ENCODE measurements at regions of chr7 and their contacts with region 1.

Region 1: DNA sequence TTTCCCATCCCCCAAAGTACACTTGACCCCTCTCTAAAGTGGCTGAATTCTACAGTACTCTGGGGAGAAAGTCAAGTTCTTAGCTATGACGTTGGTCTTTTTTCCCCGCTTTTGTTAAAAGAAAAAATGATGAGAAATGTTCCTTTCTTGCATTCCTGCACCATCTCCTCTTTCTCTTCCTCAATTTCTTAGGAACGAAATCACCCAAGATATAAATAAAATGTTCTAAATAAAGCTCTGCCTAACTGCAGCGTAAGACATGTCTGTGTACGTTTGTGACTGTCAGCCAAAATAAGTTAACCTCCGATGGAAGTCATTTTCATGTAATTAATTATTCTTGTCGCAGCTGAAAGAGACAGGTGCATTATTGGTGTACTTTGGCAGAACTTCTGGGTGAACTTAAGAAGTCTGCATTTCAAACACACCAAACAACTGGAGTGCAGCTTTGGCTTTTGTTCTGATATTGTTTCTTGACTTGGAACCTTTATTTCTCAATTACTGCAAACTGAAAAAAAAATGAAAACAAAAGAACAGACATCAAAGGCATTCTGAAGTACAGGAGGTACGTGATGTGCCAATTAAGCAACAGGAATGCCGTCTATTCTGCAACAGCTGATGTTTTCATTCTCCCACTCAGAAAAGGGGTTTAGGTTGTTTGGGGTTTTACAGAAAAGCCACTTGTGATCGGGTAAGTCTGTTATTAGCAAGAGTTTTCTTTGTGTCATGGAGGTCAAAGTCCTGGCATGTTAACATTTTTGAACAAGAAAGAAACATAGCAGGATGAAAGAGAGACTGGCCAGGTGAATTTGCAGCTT is 82.4 kb upstream of the SDK1 start:
- DNase-seq: no peak
- H3K4me3 ChIP-seq: no peak overlapping the region
- H3K27ac ChIP-seq: no peak overlapping the region
- H3K4me1 ChIP-seq: peaks cover 0 to 11% (median 0%) of the 10 kb centered on the region in 4 donors
- H3K27me3 ChIP-seq: peaks cover 11% of the 10 kb centered on the region
- CTCF ChIP-seq: no peak
- EP300 ChIP-seq: no peak
- POLR2A ChIP-seq: no peak

Region 2: GRCh38 chr7:3033581-3033980 is 185.0 kb before region 1 on chr7:
- in situ Hi-C with region 1: no loop called
- intact Hi-C with region 1: no loop called
- DNase-seq: no peak
- H3K4me3 ChIP-seq: no peak overlapping the region
- H3K27ac ChIP-seq: no peak overlapping the region
- H3K4me1 ChIP-seq: peaks cover 0 to 3% (median under 1%) of the 10 kb centered on the region in 4 donors
- H3K27me3 ChIP-seq: no peaks in the 10 kb centered on the region
- CTCF ChIP-seq: no peak
- EP300 ChIP-seq: no peak
- POLR2A ChIP-seq: no peak

Region 3: GRCh38 chr7:4279216-4279615 is 1060.6 kb after region 1 on chr7:
- in situ Hi-C with region 1: no loop called
- intact Hi-C with region 1: loop called (anchors 5 kb)
- DNase-seq: no peak
- H3K4me3 ChIP-seq: no peak overlapping the region
- H3K27ac ChIP-seq: no peak overlapping the region
- H3K4me1 ChIP-seq: no peaks in the 10 kb centered on the region
- H3K27me3 ChIP-seq: no peaks in the 10 kb centered on the region
- CTCF ChIP-seq: no peak
- EP300 ChIP-seq: no peak
- POLR2A ChIP-seq: no peak

Measured in transverse colon (tissue), 4 donors.